Panc1 (cell line): ENCODE measurements at regions of chr2 and their contacts with region 1.

Region 1: GRCh38 chr2:65974067-65974723 is 460.7 kb upstream of the MEIS1 start:
- DNase-seq: no peak
- ATAC-seq: no peak
- H3K4me3 ChIP-seq: no peak overlapping the region
- H3K27ac ChIP-seq: no peak overlapping the region
- H3K4me1 ChIP-seq: no peaks in the 10 kb centered on the region
- H3K27me3 ChIP-seq: no peaks in the 10 kb centered on the region; the same call in 1 of the 2 replicates
- CTCF ChIP-seq: no peak

Region 2: GRCh38 chr2:65278531-65278981 is 695.6 kb before region 1 on chr2:
- CTCF ChIA-PET with region 1: no interaction called
- POLR2A ChIA-PET with region 1: no interaction called
- in situ Hi-C with region 1: no loop called
- intact Hi-C with region 1: no loop called
- DNase-seq: no peak
- ATAC-seq: peak; percentile 39
- H3K4me3 ChIP-seq: no peak overlapping the region
- H3K27ac ChIP-seq: no peak overlapping the region
- H3K4me1 ChIP-seq: peaks cover 8% of the 10 kb centered on the region; the same call in 1 of the 2 replicates
- H3K27me3 ChIP-seq: no peaks in the 10 kb centered on the region
- CTCF ChIP-seq: no peak

Region 3: DNA sequence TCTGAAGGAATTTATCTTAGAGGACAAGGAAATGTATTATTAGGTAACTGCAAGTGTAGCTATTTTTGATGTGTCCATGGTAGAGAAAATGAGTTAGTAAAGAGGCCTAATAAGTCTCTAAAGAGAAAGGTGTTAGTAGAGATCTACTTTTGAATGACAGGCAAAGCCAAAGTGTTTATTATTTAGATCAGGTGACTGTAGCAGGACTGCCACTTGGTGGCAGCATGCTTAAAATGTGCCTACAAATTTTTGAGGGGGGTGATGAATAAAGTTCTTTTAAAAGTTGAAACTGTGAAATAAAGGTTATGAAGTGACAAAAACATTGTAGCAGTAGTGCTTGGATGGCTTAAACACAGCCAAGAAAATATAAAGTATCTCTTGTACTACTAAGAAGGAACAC is 39.3 kb after region 1 on chr2:
- CTCF ChIA-PET with region 1: no interaction called
- POLR2A ChIA-PET with region 1: no interaction called
- in situ Hi-C with region 1: no loop called
- intact Hi-C with region 1: no loop called
- DNase-seq: no peak
- ATAC-seq: no peak
- H3K4me3 ChIP-seq: no peak overlapping the region
- H3K27ac ChIP-seq: no peak overlapping the region
- H3K4me1 ChIP-seq: no peaks in the 10 kb centered on the region
- H3K27me3 ChIP-seq: no peaks in the 10 kb centered on the region
- CTCF ChIP-seq: no peak; the same call in 1 of the 2 replicates

Region 4: DNA sequence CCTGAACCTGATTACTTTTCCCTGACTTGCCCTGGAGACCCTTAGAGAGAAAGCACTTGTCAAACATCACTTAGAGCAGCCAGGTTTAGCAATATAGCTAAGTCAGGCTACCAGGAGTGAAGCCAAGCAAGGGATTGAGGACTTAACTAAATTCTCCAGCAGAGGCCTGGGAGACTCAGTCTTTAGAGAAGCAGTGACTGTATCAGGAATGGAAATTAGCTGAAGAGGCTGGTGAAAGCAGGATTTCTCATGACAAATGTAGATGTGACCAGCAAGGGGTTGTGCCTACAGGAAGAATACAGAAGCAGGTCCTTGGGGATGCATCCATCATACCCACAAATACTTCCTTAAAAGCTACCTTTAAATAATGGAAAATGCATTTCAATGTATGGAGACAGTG is 91.8 kb after region 1 on chr2:
- CTCF ChIA-PET with region 1: no interaction called
- POLR2A ChIA-PET with region 1: no interaction called
- in situ Hi-C with region 1: no loop called
- intact Hi-C with region 1: no loop called
- DNase-seq: no peak
- ATAC-seq: no peak
- H3K4me3 ChIP-seq: no peak overlapping the region
- H3K27ac ChIP-seq: no peak overlapping the region
- H3K4me1 ChIP-seq: no peaks in the 10 kb centered on the region
- H3K27me3 ChIP-seq: no peaks in the 10 kb centered on the region; the same call in none of the 2 replicates
- CTCF ChIP-seq: no peak

Region 5: DNA sequence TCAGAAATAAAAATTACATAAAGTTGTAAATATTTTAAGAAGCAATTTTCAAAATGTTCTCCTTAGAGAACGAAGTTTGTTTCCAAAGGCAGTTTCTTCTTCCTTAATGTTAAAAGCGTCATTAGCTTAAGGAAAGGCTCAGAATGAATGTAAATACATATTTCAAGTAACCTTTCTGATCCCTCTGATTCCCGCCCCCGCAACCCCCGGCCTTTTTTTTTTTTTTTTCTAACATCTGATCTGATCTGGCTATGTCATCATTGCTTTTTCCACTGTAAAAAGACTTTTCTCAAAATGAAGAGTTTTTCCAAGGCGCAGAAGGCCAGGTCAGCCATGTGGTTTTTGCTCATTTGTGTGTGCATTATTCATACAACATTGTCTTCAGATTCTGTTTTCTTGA is 403.6 kb after region 1 on chr2:
- CTCF ChIA-PET with region 1: no interaction called
- POLR2A ChIA-PET with region 1: no interaction called
- in situ Hi-C with region 1: no loop called
- intact Hi-C with region 1: no loop called
- DNase-seq: no peak
- ATAC-seq: no peak
- H3K4me3 ChIP-seq: no peak overlapping the region
- H3K27ac ChIP-seq: no peak overlapping the region
- H3K4me1 ChIP-seq: no peaks in the 10 kb centered on the region
- H3K27me3 ChIP-seq: no peaks in the 10 kb centered on the region; the same call in none of the 2 replicates
- CTCF ChIP-seq: no peak

Region 6: DNA sequence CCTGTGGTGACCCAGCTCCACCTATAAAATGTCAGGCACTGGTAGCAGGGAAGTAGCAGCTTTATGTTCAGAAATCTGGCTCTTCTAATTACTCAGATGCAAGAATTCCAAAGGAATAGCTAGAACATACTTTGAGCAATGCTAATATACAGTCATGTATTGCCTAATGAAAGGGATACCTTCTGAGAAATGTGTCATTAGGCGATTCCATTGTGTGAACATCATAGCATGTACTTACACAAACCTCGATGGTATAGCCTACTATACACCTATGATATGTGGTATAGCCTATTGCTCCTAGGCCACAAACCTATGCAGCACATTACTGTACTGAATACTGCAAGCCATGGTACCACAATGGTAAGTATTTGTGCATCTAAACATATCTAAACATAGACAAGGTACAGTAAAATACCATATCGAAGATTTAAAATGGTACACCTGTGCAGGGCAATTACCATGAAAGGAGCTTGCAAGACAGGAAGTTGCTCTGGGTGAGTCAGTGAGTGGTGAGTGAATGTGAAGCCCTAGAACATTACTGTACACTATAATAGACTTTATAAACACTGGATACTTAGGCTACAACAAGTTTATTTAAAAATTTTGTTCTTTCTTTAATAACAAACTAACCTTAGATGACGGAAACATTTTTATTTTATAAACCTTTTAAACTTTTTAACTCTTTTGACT is 1372.7 kb after region 1 on chr2:
- CTCF ChIA-PET with region 1: no interaction called
- POLR2A ChIA-PET with region 1: interaction called, 24 read pairs
- in situ Hi-C with region 1: no loop called
- intact Hi-C with region 1: no loop called
- DNase-seq: no peak
- ATAC-seq: no peak
- H3K4me3 ChIP-seq: no peak overlapping the region
- H3K27ac ChIP-seq: no peak overlapping the region
- H3K4me1 ChIP-seq: no peaks in the 10 kb centered on the region
- H3K27me3 ChIP-seq: no peaks in the 10 kb centered on the region
- CTCF ChIP-seq: no peak